Caco-2 (cell line): ENCODE measurements at regions of chr5 and their contacts with region 1.

Region 1: GRCh38 chr5:81371354-81371876 is 22.5 kb downstream of the ACOT12 start:
- DNase-seq: peak; percentile 81 to 82
- H3K4me3 ChIP-seq: no peak overlapping the region
- H3K4me3 Mint-ChIP-seq: peak overlapping the region; percentile 45
- H3K27ac Mint-ChIP-seq: peak overlapping the region; percentile 57
- H3K4me1 ChIP-seq: peaks cover 45% of the 10 kb centered on the region
- H3K4me1 Mint-ChIP-seq: peaks cover 60% of the 10 kb centered on the region
- H3K27me3 ChIP-seq: no peaks in the 10 kb centered on the region
- H3K27me3 Mint-ChIP-seq: no peaks in the 10 kb centered on the region
- CTCF ChIP-seq: no peak

Region 2: DNA sequence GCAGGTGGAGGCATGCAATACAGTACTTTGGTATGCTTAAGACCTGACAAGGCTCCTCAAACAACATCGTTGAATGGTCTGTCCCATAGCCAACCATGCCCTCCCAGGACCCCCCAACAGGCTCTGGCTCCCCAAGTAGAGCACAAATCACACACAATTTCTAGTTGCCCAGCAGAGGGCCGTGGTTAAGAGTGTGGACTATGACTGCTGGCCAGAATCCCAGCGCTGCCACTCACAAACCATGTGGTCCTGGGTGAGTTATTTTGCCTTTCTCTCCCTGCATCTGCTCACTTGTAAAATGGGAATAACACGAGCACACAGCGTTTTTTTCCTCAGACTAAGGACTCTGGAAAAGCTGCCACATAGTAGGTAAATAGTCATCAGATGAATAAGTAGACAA is 131.8 kb before region 1 on chr5:
- CTCF ChIA-PET with region 1: no interaction called
- POLR2A ChIA-PET with region 1: no interaction called
- intact Hi-C with region 1: no loop called
- DNase-seq: no peak
- H3K4me3 ChIP-seq: no peak overlapping the region
- H3K4me3 Mint-ChIP-seq: no peak overlapping the region
- H3K27ac Mint-ChIP-seq: no peak overlapping the region
- H3K4me1 ChIP-seq: peaks cover 5% of the 10 kb centered on the region; the same call in 1 of the 2 replicates
- H3K4me1 Mint-ChIP-seq: peaks cover 7% of the 10 kb centered on the region
- H3K27me3 ChIP-seq: no peaks in the 10 kb centered on the region
- H3K27me3 Mint-ChIP-seq: no peaks in the 10 kb centered on the region
- CTCF ChIP-seq: no peak

Region 3: GRCh38 chr5:81310402-81311063 is 60.9 kb before region 1 on chr5:
- CTCF ChIA-PET with region 1: no interaction called
- POLR2A ChIA-PET with region 1: no interaction called
- intact Hi-C with region 1: loop called (anchors 1 kb)
- DNase-seq: peak in 1 of 2 experiments; percentile 31
- H3K4me3 ChIP-seq: no peak overlapping the region
- H3K4me3 Mint-ChIP-seq: no peak overlapping the region
- H3K27ac Mint-ChIP-seq: no peak overlapping the region
- H3K4me1 ChIP-seq: peaks cover 10% of the 10 kb centered on the region
- H3K4me1 Mint-ChIP-seq: no peaks in the 10 kb centered on the region
- H3K27me3 ChIP-seq: no peaks in the 10 kb centered on the region
- H3K27me3 Mint-ChIP-seq: no peaks in the 10 kb centered on the region
- CTCF ChIP-seq: no peak

Region 4: DNA sequence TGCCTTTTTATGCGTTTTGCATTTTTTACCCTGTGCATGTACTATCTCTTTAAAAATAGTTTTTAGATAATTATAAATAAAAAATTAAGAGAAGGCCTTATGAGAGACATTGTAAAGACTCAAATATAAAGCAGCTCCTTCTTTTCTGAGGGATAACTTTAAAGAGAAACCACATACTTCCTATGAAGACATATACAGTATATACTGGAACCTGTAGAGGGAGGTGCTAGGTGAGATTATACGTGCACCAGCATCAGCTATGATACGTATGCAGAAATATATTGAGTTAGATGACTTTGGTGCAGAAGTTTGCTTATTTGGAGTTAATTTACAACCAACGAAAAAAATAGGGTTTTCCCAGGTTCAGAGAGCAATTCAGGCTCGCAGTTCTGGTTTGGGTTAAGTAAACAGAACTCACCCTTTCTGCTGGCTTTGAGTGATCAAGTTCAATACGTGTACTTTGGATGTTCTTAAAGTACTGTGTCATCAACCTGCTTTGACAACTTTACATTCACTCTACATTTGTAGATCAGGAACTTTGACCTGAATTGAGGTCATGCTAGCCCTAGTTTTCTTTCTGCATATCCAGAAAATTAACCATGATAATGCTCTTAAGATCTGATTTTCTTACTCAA is 18.3 kb before region 1 on chr5:
- CTCF ChIA-PET with region 1: no interaction called
- POLR2A ChIA-PET with region 1: no interaction called
- intact Hi-C with region 1: loop called (anchors 1 kb)
- DNase-seq: peak in 1 of 2 experiments; percentile 24
- H3K4me3 ChIP-seq: no peak overlapping the region
- H3K4me3 Mint-ChIP-seq: no peak overlapping the region
- H3K27ac Mint-ChIP-seq: no peak overlapping the region
- H3K4me1 ChIP-seq: peaks cover 34% of the 10 kb centered on the region
- H3K4me1 Mint-ChIP-seq: peaks cover 15% of the 10 kb centered on the region
- H3K27me3 ChIP-seq: no peaks in the 10 kb centered on the region
- H3K27me3 Mint-ChIP-seq: no peaks in the 10 kb centered on the region
- CTCF ChIP-seq: peak in 1 of 2 experiments; percentile 13